ENCODE measurements at regions of chr20 and their contacts with region 1.

Region 1: DNA sequence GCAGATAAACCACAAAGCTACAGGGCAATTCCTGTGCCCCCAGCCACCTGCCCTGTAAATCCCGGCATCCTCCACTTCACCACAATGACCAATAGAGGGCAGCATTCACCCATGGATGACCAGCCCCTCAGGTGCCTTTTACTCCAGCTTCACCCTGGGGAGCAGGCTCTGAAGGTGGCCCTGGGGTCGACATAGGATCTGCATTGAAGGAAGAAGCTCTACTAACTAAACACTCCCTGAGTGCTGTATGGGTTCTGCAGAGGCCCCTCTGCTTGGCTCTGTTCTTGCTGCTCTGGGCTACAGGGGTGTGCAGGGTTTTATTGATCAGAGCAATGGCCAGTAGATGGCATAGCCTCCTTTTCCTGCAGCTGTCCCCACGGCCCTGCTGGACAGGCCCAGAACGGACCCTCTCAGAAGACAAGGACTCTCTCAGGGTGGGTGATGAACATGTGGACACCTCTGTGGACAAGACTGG is 20.3 kb downstream of the CST4 start:
- DNase-seq: peak; percentile 72
- H3K4me3 Mint-ChIP-seq: no peak overlapping the region
- H3K27ac Mint-ChIP-seq: no peak overlapping the region
- H3K4me1 Mint-ChIP-seq: no peaks in the 10 kb centered on the region
- H3K27me3 Mint-ChIP-seq: no peaks in the 10 kb centered on the region
- CTCF ChIP-seq: peak; percentile 93

Region 2: GRCh38 chr20:23646106-23646873 is 22.2 kb before region 1 on chr20:
- CTCF ChIA-PET with region 1: interaction called, 18 read pairs
- POLR2A ChIA-PET with region 1: no interaction called
- intact Hi-C with region 1: no loop called
- DNase-seq: no peak
- H3K4me3 Mint-ChIP-seq: no peak overlapping the region
- H3K27ac Mint-ChIP-seq: no peak overlapping the region
- H3K4me1 Mint-ChIP-seq: peaks cover 17% of the 10 kb centered on the region
- H3K27me3 Mint-ChIP-seq: no peaks in the 10 kb centered on the region
- CTCF ChIP-seq: no peak

Region 3: GRCh38 chr20:23683281-23683680 is 14.8 kb after region 1 on chr20:
- CTCF ChIA-PET with region 1: interaction called, 11 read pairs
- POLR2A ChIA-PET with region 1: no interaction called
- intact Hi-C with region 1: no loop called
- DNase-seq: no peak
- H3K4me3 Mint-ChIP-seq: no peak overlapping the region
- H3K27ac Mint-ChIP-seq: no peak overlapping the region
- H3K4me1 Mint-ChIP-seq: no peaks in the 10 kb centered on the region
- H3K27me3 Mint-ChIP-seq: peaks cover 14% of the 10 kb centered on the region
- CTCF ChIP-seq: no peak

Region 4: GRCh38 chr20:23995905-23996666 is 327.6 kb after region 1 on chr20:
- CTCF ChIA-PET with region 1: interaction called, 49 read pairs
- POLR2A ChIA-PET with region 1: no interaction called
- intact Hi-C with region 1: loop called (anchors 1 kb)
- DNase-seq: peak; percentile 43
- H3K4me3 Mint-ChIP-seq: no peak overlapping the region
- H3K27ac Mint-ChIP-seq: no peak overlapping the region
- H3K4me1 Mint-ChIP-seq: no peaks in the 10 kb centered on the region
- H3K27me3 Mint-ChIP-seq: no peaks in the 10 kb centered on the region
- CTCF ChIP-seq: peak; percentile 65

Region 5: GRCh38 chr20:24917797-24918578 is 1249.5 kb after region 1 on chr20:
- CTCF ChIA-PET with region 1: interaction called, 13 read pairs
- POLR2A ChIA-PET with region 1: no interaction called
- intact Hi-C with region 1: loop called (anchors 1 kb)
- DNase-seq: peak; percentile 42
- H3K4me3 Mint-ChIP-seq: no peak overlapping the region
- H3K27ac Mint-ChIP-seq: no peak overlapping the region
- H3K4me1 Mint-ChIP-seq: no peaks in the 10 kb centered on the region
- H3K27me3 Mint-ChIP-seq: no peaks in the 10 kb centered on the region
- CTCF ChIP-seq: peak; percentile 75